ENCODE measurements at regions of chr14 and their contacts with region 1.

Region 1: GRCh38 chr14:24710403-24711112 is 76.6 kb upstream of the GZMB start:
- DNase-seq: peak; percentile 3
- H3K4me3 ChIP-seq: no peak overlapping the region
- CTCF ChIP-seq: peak; percentile 75

Region 2: GRCh38 chr14:24734878-24735500 is 24.4 kb after region 1 on chr14:
- CTCF ChIA-PET with region 1: interaction called, 14 read pairs
- POLR2A ChIA-PET with region 1: no interaction called
- DNase-seq: no peak
- H3K4me3 ChIP-seq: no peak overlapping the region
- CTCF ChIP-seq: peak; percentile 40

Region 3: GRCh38 chr14:24887623-24888293 is 177.2 kb after region 1 on chr14:
- CTCF ChIA-PET with region 1: no interaction called
- POLR2A ChIA-PET with region 1: no interaction called
- DNase-seq: no peak
- H3K4me3 ChIP-seq: no peak overlapping the region
- CTCF ChIP-seq: no peak

Region 4: GRCh38 chr14:25132732-25133422 is 422.3 kb after region 1 on chr14:
- CTCF ChIA-PET with region 1: interaction called, 10 read pairs
- POLR2A ChIA-PET with region 1: no interaction called
- DNase-seq: no peak
- H3K4me3 ChIP-seq: no peak overlapping the region
- CTCF ChIP-seq: peak; percentile 74

Region 5: DNA sequence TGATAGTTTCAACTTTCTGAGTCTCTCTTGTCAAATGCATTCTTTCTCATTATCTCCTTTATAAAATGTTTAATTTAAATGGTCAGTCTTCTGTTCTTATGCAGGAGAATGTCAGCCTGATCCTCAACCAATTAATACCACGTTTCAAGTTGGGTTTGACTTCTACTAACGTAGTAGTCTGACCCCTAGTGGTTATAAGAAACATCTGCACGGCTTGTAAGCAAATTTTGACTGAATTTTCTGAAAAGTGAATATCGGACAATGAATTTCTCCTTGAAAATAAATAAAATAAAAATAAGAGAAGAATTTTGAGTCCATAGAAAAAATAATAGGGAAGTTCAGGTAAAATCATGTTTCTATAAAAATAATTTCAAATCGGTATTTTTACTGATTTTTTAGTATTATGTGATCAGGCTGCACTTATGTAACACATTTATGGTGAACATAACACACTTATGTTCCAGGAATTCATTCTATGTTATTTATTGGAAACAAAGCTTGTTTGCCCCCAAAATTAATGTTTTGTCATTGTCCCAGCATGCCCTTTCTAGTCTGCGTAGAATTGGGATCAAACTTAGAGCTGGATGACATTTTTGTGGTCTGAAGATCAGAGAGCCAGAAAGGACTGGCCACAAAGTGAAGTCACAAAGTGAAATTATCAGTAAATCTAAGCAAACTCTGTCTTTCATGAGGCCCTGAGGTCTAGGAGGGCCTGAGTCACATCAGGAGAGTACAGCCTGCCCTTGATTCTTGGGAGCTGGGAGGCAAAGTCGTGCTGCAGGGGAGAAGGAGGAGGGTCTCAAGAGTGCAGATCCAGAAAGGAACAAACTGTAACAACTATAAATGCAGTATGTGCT is 440.6 kb after region 1 on chr14:
- CTCF ChIA-PET with region 1: interaction called, 11 read pairs
- POLR2A ChIA-PET with region 1: no interaction called
- DNase-seq: peak; percentile 34
- H3K4me3 ChIP-seq: no peak overlapping the region
- CTCF ChIP-seq: peak; percentile 56

Measured in AG04449 (cell line).